ENCODE measurements at regions of chr4 and their contacts with region 1.

Region 1: GRCh38 chr4:182318256-182318655 is 75.1 kb downstream of the TENM3 start:
- DNase-seq: no peak
- ATAC-seq: no peak
- H3K4me3 ChIP-seq: no peak overlapping the region
- H3K27ac ChIP-seq: no peak overlapping the region
- H3K4me1 ChIP-seq: no peaks in the 10 kb centered on the region
- H3K27me3 ChIP-seq: no peaks in the 10 kb centered on the region
- CTCF ChIP-seq: no peak

Region 2: DNA sequence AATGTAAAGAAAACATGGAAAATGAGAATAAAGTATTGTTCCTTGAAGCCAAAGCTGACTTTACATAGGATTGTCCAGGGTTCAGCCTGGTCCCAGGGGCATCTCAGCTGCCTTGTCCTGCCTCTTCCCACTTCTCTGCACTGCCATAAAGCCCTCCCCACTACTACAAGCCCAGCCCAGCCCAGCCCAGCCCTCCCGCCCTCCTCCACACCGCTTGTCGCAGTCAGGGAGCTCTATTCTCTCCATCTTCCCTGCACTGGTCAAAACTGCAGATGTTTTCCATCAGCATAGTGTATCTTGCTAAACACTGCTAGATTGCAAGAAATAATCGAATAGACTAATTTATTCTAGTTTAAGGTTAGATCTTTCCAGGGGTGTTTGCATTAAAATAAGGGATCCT is 25.2 kb after region 1 on chr4:
- intact Hi-C with region 1: loop called in 1 of 2 experiments (anchors 1 kb)
- DNase-seq: no peak
- ATAC-seq: no peak
- H3K4me3 ChIP-seq: no peak overlapping the region
- H3K27ac ChIP-seq: no peak overlapping the region
- H3K4me1 ChIP-seq: no peaks in the 10 kb centered on the region
- H3K27me3 ChIP-seq: no peaks in the 10 kb centered on the region
- CTCF ChIP-seq: no peak

Region 3: DNA sequence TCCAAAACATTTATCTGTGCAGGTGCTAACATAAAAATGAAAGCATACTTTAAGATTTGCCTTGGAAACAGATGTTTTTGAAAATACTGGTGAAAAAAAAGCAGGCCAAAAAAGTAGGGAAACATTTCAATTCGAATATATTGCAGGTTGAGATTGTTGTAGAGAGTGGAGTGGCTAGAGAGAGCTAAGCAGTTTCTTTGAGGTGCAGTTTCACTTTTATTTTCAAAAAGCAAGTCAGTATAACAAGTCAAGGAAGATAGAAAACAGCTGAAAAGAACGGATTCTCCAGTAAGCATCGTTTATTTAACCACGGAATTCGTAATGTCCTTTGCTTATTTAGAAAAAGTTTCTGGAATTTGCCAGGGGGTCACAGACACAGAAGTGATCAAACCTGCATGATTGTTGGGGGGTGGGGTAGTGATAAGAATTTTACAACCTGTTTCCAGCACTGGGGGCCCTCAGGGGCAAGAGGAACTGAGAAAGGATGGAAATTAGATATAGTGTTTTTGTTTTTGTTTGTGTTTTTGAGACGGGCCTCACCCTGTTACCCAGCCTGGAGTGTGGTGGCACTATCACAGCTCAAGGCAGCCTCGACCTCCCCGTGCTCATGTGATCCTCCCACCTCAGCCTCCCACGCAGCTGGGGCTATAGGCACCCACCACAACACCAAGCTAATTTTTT is 99.9 kb after region 1 on chr4:
- intact Hi-C with region 1: no loop called
- DNase-seq: no peak
- ATAC-seq: no peak
- H3K4me3 ChIP-seq: no peak overlapping the region
- H3K27ac ChIP-seq: no peak overlapping the region
- H3K4me1 ChIP-seq: no peaks in the 10 kb centered on the region
- H3K27me3 ChIP-seq: no peaks in the 10 kb centered on the region
- CTCF ChIP-seq: no peak

Region 4: GRCh38 chr4:182429896-182430295 is 111.6 kb after region 1 on chr4:
- intact Hi-C with region 1: no loop called
- DNase-seq: no peak
- ATAC-seq: no peak
- H3K4me3 ChIP-seq: no peak overlapping the region
- H3K27ac ChIP-seq: no peak overlapping the region
- H3K4me1 ChIP-seq: no peaks in the 10 kb centered on the region
- H3K27me3 ChIP-seq: no peaks in the 10 kb centered on the region
- CTCF ChIP-seq: no peak

Region 5: GRCh38 chr4:182604161-182604622 is 285.9 kb after region 1 on chr4:
- intact Hi-C with region 1: no loop called
- DNase-seq: no peak
- ATAC-seq: no peak
- H3K4me3 ChIP-seq: no peak overlapping the region
- H3K27ac ChIP-seq: no peak overlapping the region
- H3K4me1 ChIP-seq: no peaks in the 10 kb centered on the region
- H3K27me3 ChIP-seq: no peaks in the 10 kb centered on the region
- CTCF ChIP-seq: no peak